ENCODE measurements at regions of chr19 and their contacts with region 1.

Region 1: GRCh38 chr19:14405758-14406644 is 13.1 kb downstream of the DDX39A start:
- DNase-seq: peak; percentile 88 to 96 (median 92)
- H3K4me3 ChIP-seq: no peak overlapping the region
- H3K27ac ChIP-seq: peak overlapping the region; percentile 22 to 61
- H3K4me1 ChIP-seq: peaks cover 6% of the 10 kb centered on the region
- H3K27me3 ChIP-seq: no peaks in the 10 kb centered on the region
- CTCF ChIP-seq: peak; percentile 76 to 94 (median 88)
- EP300 ChIP-seq: no peak
- POLR2A ChIP-seq: no peak

Region 2: GRCh38 chr19:14198384-14199376 is 207.3 kb before region 1 on chr19:
- intact Hi-C with region 1: loop called in 1 of 4 experiments (anchors 5 kb)
- DNase-seq: no peak
- H3K4me3 ChIP-seq: no peak overlapping the region
- H3K27ac ChIP-seq: no peak overlapping the region
- H3K4me1 ChIP-seq: peaks cover 1% of the 10 kb centered on the region
- H3K27me3 ChIP-seq: no peaks in the 10 kb centered on the region
- CTCF ChIP-seq: no peak
- EP300 ChIP-seq: no peak
- POLR2A ChIP-seq: no peak

Region 3: GRCh38 chr19:14363183-14364097 is 42.6 kb before region 1 on chr19:
- intact Hi-C with region 1: loop called in 1 of 4 experiments (anchors 5 kb)
- DNase-seq: peak; percentile 63 to 88 (median 84)
- H3K4me3 ChIP-seq: peak overlapping the region; percentile 6
- H3K27ac ChIP-seq: peak overlapping the region in 1 of 2 donors; percentile 42
- H3K4me1 ChIP-seq: peaks cover 4% of the 10 kb centered on the region
- H3K27me3 ChIP-seq: no peaks in the 10 kb centered on the region
- CTCF ChIP-seq: no peak
- EP300 ChIP-seq: no peak
- POLR2A ChIP-seq: no peak